ENCODE measurements at regions of chr22 and their contacts with region 1.

Region 1: GRCh38 chr22:30386960-30387827 is at the start of gene RNF215:
- DNase-seq: peak; percentile 69 to 90
- H3K4me3 ChIP-seq: peak within 1 kb of the TSS; percentile 64
- H3K4me3 Mint-ChIP-seq: peak within 1 kb of the TSS; percentile 67
- H3K27ac Mint-ChIP-seq: peak within 1 kb of the TSS; percentile 12
- H3K4me1 ChIP-seq: 0 out of 2 replicates have a peak, but pooled peaks cover 4% of the 10 kb centered on the region
- H3K4me1 Mint-ChIP-seq: no peaks in the 10 kb centered on the region
- H3K27me3 ChIP-seq: no peaks in the 10 kb centered on the region
- H3K27me3 Mint-ChIP-seq: no peaks in the 10 kb centered on the region
- CTCF ChIP-seq: peak; percentile 84 to 88
- total RNA-seq, gene RNF215: 12.8 and 14.2 TPM in 2 replicates

Region 2: GRCh38 chr22:30104501-30105156 is 282.6 kb before region 1 on chr22:
- CTCF ChIA-PET with region 1: interaction called, 3 read pairs
- POLR2A ChIA-PET with region 1: no interaction called
- intact Hi-C with region 1: loop called (anchors 5 kb)
- DNase-seq: no peak
- H3K4me3 ChIP-seq: no peak overlapping the region
- H3K4me3 Mint-ChIP-seq: no peak overlapping the region
- H3K27ac Mint-ChIP-seq: no peak overlapping the region
- H3K4me1 ChIP-seq: no peaks in the 10 kb centered on the region
- H3K4me1 Mint-ChIP-seq: peaks cover 11% of the 10 kb centered on the region
- H3K27me3 ChIP-seq: no peaks in the 10 kb centered on the region
- H3K27me3 Mint-ChIP-seq: no peaks in the 10 kb centered on the region
- CTCF ChIP-seq: no peak

Region 3: DNA sequence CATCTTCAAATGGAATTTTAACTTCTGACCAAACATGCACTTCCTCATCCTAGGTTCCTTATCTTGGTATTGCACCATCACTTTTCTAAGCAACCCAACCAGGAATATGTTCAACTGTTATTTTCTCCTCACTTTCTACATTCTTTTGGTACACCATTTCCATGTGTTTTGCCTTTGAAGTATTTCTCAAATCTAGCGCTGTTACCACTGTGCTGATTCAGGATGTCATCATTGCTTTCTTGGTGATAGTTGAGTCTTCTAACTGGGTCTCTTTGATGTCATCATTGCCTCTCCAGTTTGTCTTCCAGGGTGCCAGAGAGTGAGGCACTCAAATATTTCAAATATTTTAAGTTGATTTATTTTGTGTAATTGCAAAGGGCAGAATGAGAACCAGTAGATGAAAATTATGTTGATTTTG is 259.4 kb before region 1 on chr22:
- CTCF ChIA-PET with region 1: no interaction called
- POLR2A ChIA-PET with region 1: no interaction called
- intact Hi-C with region 1: no loop called
- DNase-seq: peak in 1 of 2 experiments; percentile 27
- H3K4me3 ChIP-seq: no peak overlapping the region
- H3K4me3 Mint-ChIP-seq: no peak overlapping the region
- H3K27ac Mint-ChIP-seq: no peak overlapping the region
- H3K4me1 ChIP-seq: peaks cover 10% of the 10 kb centered on the region
- H3K4me1 Mint-ChIP-seq: no peaks in the 10 kb centered on the region
- H3K27me3 ChIP-seq: no peaks in the 10 kb centered on the region
- H3K27me3 Mint-ChIP-seq: no peaks in the 10 kb centered on the region
- CTCF ChIP-seq: no peak

Region 4: GRCh38 chr22:30262917-30263741 is 124.1 kb before region 1 on chr22:
- CTCF ChIA-PET with region 1: interaction called, 8 read pairs
- POLR2A ChIA-PET with region 1: no interaction called
- intact Hi-C with region 1: loop called (anchors 2 kb)
- DNase-seq: peak; percentile 80 to 86
- H3K4me3 ChIP-seq: no peak overlapping the region
- H3K4me3 Mint-ChIP-seq: no peak overlapping the region
- H3K27ac Mint-ChIP-seq: no peak overlapping the region
- H3K4me1 ChIP-seq: peaks cover 13% of the 10 kb centered on the region
- H3K4me1 Mint-ChIP-seq: peaks cover 2% of the 10 kb centered on the region
- H3K27me3 ChIP-seq: no peaks in the 10 kb centered on the region
- H3K27me3 Mint-ChIP-seq: no peaks in the 10 kb centered on the region
- CTCF ChIP-seq: peak; percentile 95 to 98

Region 5: DNA sequence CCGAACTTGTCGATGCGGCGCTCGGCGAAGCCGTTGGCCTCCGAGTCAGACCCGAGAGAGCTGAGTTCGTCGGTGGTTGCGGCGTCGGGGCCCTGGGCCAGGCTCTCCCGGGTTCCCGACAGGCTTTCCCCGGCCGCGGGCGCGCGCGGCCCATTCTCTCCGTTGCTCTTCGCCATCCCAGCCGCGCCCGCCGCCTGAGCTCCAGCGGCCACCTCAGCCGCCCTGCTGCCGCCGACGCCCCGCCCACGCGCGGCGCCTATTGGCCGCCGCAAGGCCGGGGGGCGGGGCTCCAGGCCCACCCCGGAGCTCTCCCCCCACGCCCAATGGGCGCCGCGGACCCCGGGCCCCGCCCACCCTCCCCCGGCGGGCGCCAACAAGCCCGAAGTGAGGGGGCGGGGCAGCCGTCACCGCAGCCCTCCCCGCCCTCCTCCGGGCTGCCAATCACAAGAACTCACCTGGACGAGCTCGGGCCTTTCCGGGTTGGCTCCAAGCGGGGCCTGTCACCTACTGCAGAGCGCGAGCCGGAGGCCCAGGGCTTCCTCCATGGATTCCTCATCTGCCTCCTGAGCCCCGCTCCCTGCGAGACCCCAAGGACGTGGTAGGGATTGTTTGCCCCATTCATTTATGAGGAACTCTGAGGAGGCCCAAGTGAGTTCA is 60.4 kb before region 1 on chr22 and contains the start of gene TBC1D10A:
- CTCF ChIA-PET with region 1: interaction called, 6 read pairs
- POLR2A ChIA-PET with region 1: no interaction called
- intact Hi-C with region 1: loop called (anchors 2 kb)
- DNase-seq: peak; percentile 96
- H3K4me3 ChIP-seq: peak within 1 kb of the TSS; percentile 87
- H3K4me3 Mint-ChIP-seq: peak within 1 kb of the TSS; percentile 79
- H3K27ac Mint-ChIP-seq: peak within 1 kb of the TSS; percentile 90
- H3K4me1 ChIP-seq: peaks cover 27% of the 10 kb centered on the region
- H3K4me1 Mint-ChIP-seq: peaks cover 30% of the 10 kb centered on the region
- H3K27me3 ChIP-seq: no peaks in the 10 kb centered on the region
- H3K27me3 Mint-ChIP-seq: no peaks in the 10 kb centered on the region
- CTCF ChIP-seq: no peak
- total RNA-seq, gene TBC1D10A: 11.1 and 12.2 TPM in 2 replicates

Region 6: GRCh38 chr22:30356449-30357235 is 30.6 kb before region 1 on chr22 and contains the starts of genes CCDC157 and SF3A1:
- CTCF ChIA-PET with region 1: interaction called, 10 read pairs
- POLR2A ChIA-PET with region 1: interaction called, 4 read pairs
- intact Hi-C with region 1: no loop called
- DNase-seq: peak; percentile 90
- H3K4me3 ChIP-seq: peak within 1 kb of the TSS; percentile 99
- H3K4me3 Mint-ChIP-seq: peak within 1 kb of the TSS; percentile 95
- H3K27ac Mint-ChIP-seq: peak within 1 kb of the TSS; percentile 92
- H3K4me1 ChIP-seq: peaks cover 35% of the 10 kb centered on the region
- H3K4me1 Mint-ChIP-seq: peaks cover 36% of the 10 kb centered on the region
- H3K27me3 ChIP-seq: no peaks in the 10 kb centered on the region
- H3K27me3 Mint-ChIP-seq: no peaks in the 10 kb centered on the region
- CTCF ChIP-seq: no peak
- total RNA-seq, gene CCDC157: 4.8 and 4.9 TPM in 2 replicates
- total RNA-seq, gene SF3A1: 182 and 188 TPM in 2 replicates

Region 7: GRCh38 chr22:30423982-30424963 is 37.1 kb after region 1 on chr22:
- CTCF ChIA-PET with region 1: interaction called, 18 read pairs
- POLR2A ChIA-PET with region 1: interaction called, 4 read pairs
- intact Hi-C with region 1: loop called (anchors 1 kb)
- DNase-seq: peak; percentile 98 to 99
- H3K4me3 ChIP-seq: peak overlapping the region; percentile 62
- H3K4me3 Mint-ChIP-seq: peak overlapping the region; percentile 85
- H3K27ac Mint-ChIP-seq: peak overlapping the region; percentile 82
- H3K4me1 ChIP-seq: peaks cover 39% of the 10 kb centered on the region
- H3K4me1 Mint-ChIP-seq: peaks cover 35% of the 10 kb centered on the region
- H3K27me3 ChIP-seq: no peaks in the 10 kb centered on the region
- H3K27me3 Mint-ChIP-seq: no peaks in the 10 kb centered on the region
- CTCF ChIP-seq: no peak

Region 8: GRCh38 chr22:30485362-30485988 is 98.3 kb after region 1 on chr22:
- CTCF ChIA-PET with region 1: interaction called, 4 read pairs
- POLR2A ChIA-PET with region 1: no interaction called
- intact Hi-C with region 1: loop called (anchors 1 kb)
- DNase-seq: peak; percentile 62 to 82
- H3K4me3 ChIP-seq: no peak overlapping the region
- H3K4me3 Mint-ChIP-seq: no peak overlapping the region
- H3K27ac Mint-ChIP-seq: no peak overlapping the region
- H3K4me1 ChIP-seq: no peaks in the 10 kb centered on the region
- H3K4me1 Mint-ChIP-seq: no peaks in the 10 kb centered on the region
- H3K27me3 ChIP-seq: no peaks in the 10 kb centered on the region
- H3K27me3 Mint-ChIP-seq: peaks cover 5% of the 10 kb centered on the region
- CTCF ChIP-seq: peak; percentile 89 to 96